Mammary epithelial cell (primary cell): ENCODE measurements at regions of chr5 and their contacts with region 1.

Region 1: GRCh38 chr5:113678924-113679575 is 165.6 kb downstream of the YTHDC2 start:
- DNase-seq: peak; percentile 36
- H3K4me3 ChIP-seq: no peak overlapping the region
- H3K27ac ChIP-seq: no peak overlapping the region
- H3K4me1 ChIP-seq: no peaks in the 10 kb centered on the region
- H3K27me3 ChIP-seq: no peaks in the 10 kb centered on the region
- CTCF ChIP-seq: peak; percentile 79 to 82

Region 2: GRCh38 chr5:113806250-113806649 is 127.2 kb after region 1 on chr5:
- CTCF ChIA-PET with region 1: no interaction called
- dilution Hi-C with region 1: no loop called
- in situ Hi-C with region 1: no loop called
- intact Hi-C with region 1: loop called (anchors 1 kb)
- DNase-seq: peak; percentile 17
- H3K4me3 ChIP-seq: no peak overlapping the region
- H3K27ac ChIP-seq: no peak overlapping the region
- H3K4me1 ChIP-seq: peaks cover 7% of the 10 kb centered on the region
- H3K27me3 ChIP-seq: no peaks in the 10 kb centered on the region
- CTCF ChIP-seq: peak; percentile 32 to 39

Region 3: GRCh38 chr5:114101153-114101552 is 422.1 kb after region 1 on chr5:
- CTCF ChIA-PET with region 1: no interaction called
- dilution Hi-C with region 1: no loop called
- in situ Hi-C with region 1: no loop called
- intact Hi-C with region 1: loop called (anchors 2 kb)
- DNase-seq: peak; percentile 17
- H3K4me3 ChIP-seq: no peak overlapping the region
- H3K27ac ChIP-seq: no peak overlapping the region
- H3K4me1 ChIP-seq: no peaks in the 10 kb centered on the region
- H3K27me3 ChIP-seq: no peaks in the 10 kb centered on the region
- CTCF ChIP-seq: peak; percentile 75 to 76

Region 4: DNA sequence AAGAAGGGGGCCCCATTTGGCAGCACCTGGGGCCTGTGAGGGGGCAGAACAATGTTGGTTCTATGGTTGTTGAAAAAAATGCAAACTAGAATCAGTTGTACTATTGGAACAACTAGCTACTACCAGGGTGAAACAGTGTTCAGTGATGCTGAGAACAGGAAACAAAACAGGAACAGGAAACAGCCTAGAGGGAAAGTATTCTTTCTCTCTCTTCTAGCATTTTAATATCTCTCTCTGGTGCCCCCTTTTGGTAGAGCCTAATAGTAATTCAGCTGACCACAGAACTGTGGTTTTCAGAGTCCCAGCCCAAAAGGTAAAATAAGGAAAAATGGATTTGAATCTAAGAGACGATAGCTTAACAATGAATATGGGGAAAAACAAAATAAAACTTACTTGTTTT is 544.8 kb after region 1 on chr5:
- CTCF ChIA-PET with region 1: no interaction called
- dilution Hi-C with region 1: no loop called
- in situ Hi-C with region 1: no loop called
- intact Hi-C with region 1: loop called (anchors 5 kb)
- DNase-seq: peak; percentile 35
- H3K4me3 ChIP-seq: no peak overlapping the region
- H3K27ac ChIP-seq: no peak overlapping the region
- H3K4me1 ChIP-seq: no peaks in the 10 kb centered on the region
- H3K27me3 ChIP-seq: peaks cover 2% of the 10 kb centered on the region
- CTCF ChIP-seq: peak; percentile 67 to 77

Region 5: GRCh38 chr5:114305402-114306211 is 626.6 kb after region 1 on chr5:
- CTCF ChIA-PET with region 1: no interaction called
- dilution Hi-C with region 1: no loop called
- in situ Hi-C with region 1: no loop called
- intact Hi-C with region 1: loop called (anchors 2 kb)
- DNase-seq: peak; percentile 6
- H3K4me3 ChIP-seq: no peak overlapping the region
- H3K27ac ChIP-seq: no peak overlapping the region
- H3K4me1 ChIP-seq: no peaks in the 10 kb centered on the region
- H3K27me3 ChIP-seq: peaks cover under 1% of the 10 kb centered on the region
- CTCF ChIP-seq: peak; percentile 40 to 54